ENCODE measurements at regions of chr12 and their contacts with region 1.

Region 1: GRCh38 chr12:40107098-40107802 is 1.4 kb upstream of the SLC2A13 start:
- DNase-seq: peak; percentile 82 to 84 (median 82)
- H3K4me3 ChIP-seq: peak overlapping the region; percentile 39 to 48
- H3K4me3 Mint-ChIP-seq: peak overlapping the region; percentile 82 to 93 (median 88)
- H3K27ac ChIP-seq: peak overlapping the region; percentile 59
- H3K27ac Mint-ChIP-seq: peak overlapping the region; percentile 53 to 92 (median 74)
- H3K4me1 ChIP-seq: peaks cover 30% of the 10 kb centered on the region
- H3K4me1 Mint-ChIP-seq: peaks cover 19 to 39% (median 29%) of the 10 kb centered on the region in 4 donors
- H3K27me3 ChIP-seq: no peaks in the 10 kb centered on the region
- H3K27me3 Mint-ChIP-seq: peaks cover 3% of the 10 kb centered on the region in 2 donors

Region 2: GRCh38 chr12:39319187-39319586 is 788.1 kb before region 1 on chr12:
- CTCF ChIA-PET with region 1: interaction called, 5 read pairs
- POLR2A ChIA-PET with region 1: interaction called, 4 read pairs
- intact Hi-C with region 1: loop called (anchors 1 kb)
- DNase-seq: peak in 1 of 5 donors; percentile 14
- H3K4me3 ChIP-seq: no peak overlapping the region
- H3K4me3 Mint-ChIP-seq: no peak overlapping the region
- H3K27ac ChIP-seq: no peak overlapping the region
- H3K27ac Mint-ChIP-seq: peak overlapping the region in 1 of 7 donors; percentile 47
- H3K4me1 ChIP-seq: no peaks in the 10 kb centered on the region
- H3K4me1 Mint-ChIP-seq: peaks cover 0 to 2% (median 0%) of the 10 kb centered on the region in 4 donors
- H3K27me3 ChIP-seq: no peaks in the 10 kb centered on the region
- H3K27me3 Mint-ChIP-seq: no peaks in the 10 kb centered on the region

Region 3: DNA sequence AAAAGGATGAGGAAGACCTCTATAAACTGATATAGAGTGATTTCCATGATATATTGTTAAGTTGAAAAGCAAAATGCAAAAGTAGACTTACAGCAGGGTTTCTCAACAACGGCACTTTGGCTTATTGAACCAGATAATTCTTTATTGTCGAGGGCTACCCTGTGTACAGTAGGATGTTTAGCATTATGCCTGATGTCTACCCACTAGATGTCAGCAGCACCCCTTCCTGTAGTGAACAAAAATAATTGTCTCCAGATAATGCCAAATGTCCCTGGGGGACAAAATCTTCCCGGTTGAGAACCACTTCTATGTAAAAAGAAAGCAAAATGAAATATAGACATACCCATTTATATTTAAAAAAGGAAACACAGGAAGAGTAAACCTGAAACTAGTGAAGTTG is 520.0 kb before region 1 on chr12:
- CTCF ChIA-PET with region 1: interaction called, 4 read pairs
- POLR2A ChIA-PET with region 1: no interaction called
- intact Hi-C with region 1: loop called (anchors 1 kb)
- DNase-seq: peak; percentile 36 to 50 (median 40)
- H3K4me3 ChIP-seq: no peak overlapping the region
- H3K4me3 Mint-ChIP-seq: no peak overlapping the region
- H3K27ac ChIP-seq: no peak overlapping the region
- H3K27ac Mint-ChIP-seq: no peak overlapping the region
- H3K4me1 ChIP-seq: no peaks in the 10 kb centered on the region
- H3K4me1 Mint-ChIP-seq: peaks cover 3 to 7% (median 5%) of the 10 kb centered on the region in 4 donors
- H3K27me3 ChIP-seq: no peaks in the 10 kb centered on the region
- H3K27me3 Mint-ChIP-seq: no peaks in the 10 kb centered on the region

Region 4: DNA sequence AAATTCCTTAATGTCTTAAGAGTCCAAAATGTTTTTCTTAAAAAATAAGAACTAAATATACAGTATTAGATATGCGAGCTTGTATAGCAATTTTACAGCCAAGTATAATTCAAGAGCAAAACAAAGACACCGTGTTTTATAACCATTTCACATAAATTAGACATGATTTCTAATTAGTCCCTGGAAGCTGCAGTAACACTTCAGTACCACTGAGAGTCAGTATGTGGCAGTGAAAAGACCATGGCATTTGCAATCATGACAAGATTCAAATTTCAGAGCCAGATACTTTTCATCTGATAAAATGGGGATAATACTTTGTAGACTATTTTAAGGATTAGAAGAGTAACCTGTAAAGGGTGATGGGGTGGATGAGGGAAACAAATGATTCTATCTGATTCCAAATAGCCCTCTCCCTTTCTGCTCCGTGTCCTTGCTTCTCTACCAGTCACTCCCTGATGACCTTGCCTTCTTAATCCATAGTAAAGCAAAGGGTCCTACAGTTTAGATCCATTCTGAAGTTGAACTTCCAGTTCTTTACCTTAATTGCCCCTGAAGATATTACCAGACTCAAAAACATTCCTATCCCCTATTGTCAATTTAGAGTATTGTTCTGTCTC is 342.2 kb before region 1 on chr12:
- CTCF ChIA-PET with region 1: interaction called, 4 read pairs
- POLR2A ChIA-PET with region 1: no interaction called
- intact Hi-C with region 1: loop called (anchors 1 kb)
- DNase-seq: peak in 4 of 5 donors; percentile 8 to 11 (median 10)
- H3K4me3 ChIP-seq: no peak overlapping the region
- H3K4me3 Mint-ChIP-seq: no peak overlapping the region
- H3K27ac ChIP-seq: no peak overlapping the region
- H3K27ac Mint-ChIP-seq: no peak overlapping the region
- H3K4me1 ChIP-seq: no peaks in the 10 kb centered on the region
- H3K4me1 Mint-ChIP-seq: no peaks in the 10 kb centered on the region
- H3K27me3 ChIP-seq: no peaks in the 10 kb centered on the region
- H3K27me3 Mint-ChIP-seq: peaks cover 0 to 4% of the 10 kb centered on the region in 2 donors

Region 5: GRCh38 chr12:40117818-40118217 is 10.6 kb after region 1 on chr12:
- CTCF ChIA-PET with region 1: interaction called, 50 read pairs
- POLR2A ChIA-PET with region 1: interaction called, 3 read pairs
- intact Hi-C with region 1: no loop called
- DNase-seq: no peak
- H3K4me3 ChIP-seq: no peak overlapping the region
- H3K4me3 Mint-ChIP-seq: peak overlapping the region in 1 of 8 donors; percentile 62
- H3K27ac ChIP-seq: no peak overlapping the region
- H3K27ac Mint-ChIP-seq: no peak overlapping the region
- H3K4me1 ChIP-seq: no peaks in the 10 kb centered on the region
- H3K4me1 Mint-ChIP-seq: peaks cover 0 to 6% (median 1%) of the 10 kb centered on the region in 4 donors
- H3K27me3 ChIP-seq: no peaks in the 10 kb centered on the region
- H3K27me3 Mint-ChIP-seq: peaks cover 0 to 3% of the 10 kb centered on the region in 2 donors

Measured in CD4-positive, alpha-beta memory T cell (primary cell).